A549 (cell line): ENCODE measurements at regions of chr14 and their contacts with region 1.

Region 1: DNA sequence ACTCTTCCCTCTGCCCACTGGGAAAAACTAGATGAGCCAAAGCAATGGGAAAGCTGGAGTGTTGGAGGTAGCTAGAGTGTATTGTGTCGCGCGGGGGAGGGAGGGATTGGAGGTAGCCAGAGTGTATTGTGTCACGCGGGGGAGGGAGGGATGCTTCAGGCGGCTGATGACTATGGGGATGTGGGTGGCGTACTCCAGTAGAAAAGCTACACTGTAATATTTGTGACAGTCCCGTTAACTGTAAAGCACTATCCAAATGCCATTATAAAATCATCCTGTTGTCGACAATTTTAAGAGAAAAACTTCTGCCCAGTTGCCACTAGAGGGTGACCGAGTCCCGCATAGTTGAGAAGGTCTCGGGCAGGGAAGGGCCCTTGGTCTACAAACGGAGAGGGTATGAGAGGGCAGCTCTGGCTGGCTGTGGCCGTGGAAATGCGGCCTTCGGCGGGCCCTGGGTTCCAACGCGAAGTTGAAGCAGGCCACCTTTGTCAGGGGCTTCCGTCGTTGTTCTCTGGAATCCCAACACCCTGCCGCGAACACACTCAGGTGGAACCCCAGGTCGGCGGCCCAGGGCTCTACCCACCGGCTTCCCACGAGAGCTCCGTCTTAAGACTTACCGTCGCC is 15.1 kb upstream of the PLEK2 start:
- DNase-seq: peak; percentile 85 to 91
- ATAC-seq: peak; percentile 85 to 94
- H3K4me3 ChIP-seq: no peak overlapping the region
- H3K27ac ChIP-seq: peak overlapping the region in 1 of 2 experiments; percentile 35; a peak in 1 of 6 replicates
- H3K4me1 ChIP-seq: peaks cover 9% of the 10 kb centered on the region
- CTCF ChIP-seq: peak; percentile 78
- EP300 ChIP-seq: no peak
- POLR2A ChIP-seq: no peak
- RAD21 ChIP-seq: peak; percentile 86 to 95

Region 2: DNA sequence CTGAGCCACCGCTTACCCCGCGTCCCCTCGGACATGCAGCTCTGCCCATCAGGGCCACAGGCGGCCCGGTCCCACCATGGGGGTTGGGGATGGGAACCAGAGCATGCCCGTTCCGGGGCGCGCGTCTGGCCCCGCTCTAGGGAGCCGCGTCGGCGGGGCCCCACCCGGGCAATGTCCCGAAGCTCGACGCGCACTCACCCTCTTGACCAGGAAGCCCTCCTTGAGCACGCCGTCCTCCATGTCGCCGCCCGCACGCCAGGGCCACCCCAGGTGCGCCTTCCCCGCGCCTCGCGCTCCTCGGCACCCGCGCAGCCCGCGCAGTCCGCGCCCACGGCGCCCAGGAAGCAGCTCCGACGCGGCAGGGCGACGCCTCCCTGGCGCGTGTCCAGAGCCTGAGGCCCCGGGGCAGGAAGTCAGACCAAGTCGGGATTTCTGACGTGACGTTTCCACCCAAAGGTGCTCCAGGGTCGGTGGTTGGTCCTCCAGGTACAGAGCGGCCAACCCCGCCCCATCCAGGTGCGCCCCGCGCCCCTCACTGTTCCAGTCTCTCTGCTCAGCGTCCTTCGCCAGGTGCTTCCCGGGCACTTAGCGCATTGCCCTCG is 15.2 kb before region 1 on chr14 and contains the start of gene PLEK2:
- CTCF ChIA-PET with region 1: interaction called, 109 read pairs
- POLR2A ChIA-PET with region 1: no interaction called
- DNase-seq: peak; percentile 40 to 53
- ATAC-seq: peak; percentile 71 to 73
- H3K4me3 ChIP-seq: peak within 1 kb of the TSS; percentile 58
- H3K27ac ChIP-seq: peak within 1 kb of the TSS; percentile 74 to 84
- H3K4me1 ChIP-seq: peaks cover 26% of the 10 kb centered on the region
- CTCF ChIP-seq: no peak
- EP300 ChIP-seq: no peak
- POLR2A ChIP-seq: no peak
- RAD21 ChIP-seq: no peak
- polyA plus RNA-seq, gene PLEK2: 14.7 and 15.1 TPM in 2 replicates

Region 3: DNA sequence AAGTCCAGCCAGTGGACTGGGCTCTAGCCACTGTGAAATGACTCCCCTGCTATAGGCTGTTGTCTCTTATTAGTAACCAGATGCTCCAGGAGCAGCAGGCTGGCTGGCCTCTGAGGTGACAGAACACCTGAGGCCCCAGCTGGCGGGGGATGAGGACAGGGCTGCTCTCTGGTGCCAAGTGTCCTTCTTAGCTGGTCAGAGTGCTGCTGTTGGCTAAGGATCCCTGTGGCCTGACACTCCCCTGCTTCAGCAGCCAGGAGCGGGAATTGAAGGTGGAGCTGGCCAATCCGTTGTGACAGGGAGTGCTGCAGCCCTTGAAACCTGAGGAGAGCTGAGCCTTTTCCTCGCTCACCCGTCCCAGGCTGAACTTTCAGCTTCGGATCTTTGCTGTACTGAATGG is 30.7 kb after region 1 on chr14:
- CTCF ChIA-PET with region 1: interaction called, 10 read pairs
- POLR2A ChIA-PET with region 1: no interaction called
- DNase-seq: no peak
- ATAC-seq: peak; percentile 37 to 57; a peak in 3 of 6 replicates
- H3K4me3 ChIP-seq: no peak overlapping the region
- H3K27ac ChIP-seq: no peak overlapping the region
- H3K4me1 ChIP-seq: no peaks in the 10 kb centered on the region
- CTCF ChIP-seq: no peak
- EP300 ChIP-seq: no peak
- POLR2A ChIP-seq: no peak
- RAD21 ChIP-seq: no peak

Region 4: GRCh38 chr14:67514650-67515385 is 87.7 kb after region 1 on chr14:
- CTCF ChIA-PET with region 1: interaction called, 14 read pairs
- POLR2A ChIA-PET with region 1: no interaction called
- DNase-seq: peak in 1 of 2 experiments; percentile 45
- ATAC-seq: peak; percentile 54 to 65; a peak in 5 of 6 replicates
- H3K4me3 ChIP-seq: peak overlapping the region; percentile 78
- H3K27ac ChIP-seq: peak overlapping the region; percentile 63 to 88
- H3K4me1 ChIP-seq: no peaks in the 10 kb centered on the region
- CTCF ChIP-seq: no peak
- EP300 ChIP-seq: no peak
- POLR2A ChIP-seq: no peak
- RAD21 ChIP-seq: no peak

Region 5: DNA sequence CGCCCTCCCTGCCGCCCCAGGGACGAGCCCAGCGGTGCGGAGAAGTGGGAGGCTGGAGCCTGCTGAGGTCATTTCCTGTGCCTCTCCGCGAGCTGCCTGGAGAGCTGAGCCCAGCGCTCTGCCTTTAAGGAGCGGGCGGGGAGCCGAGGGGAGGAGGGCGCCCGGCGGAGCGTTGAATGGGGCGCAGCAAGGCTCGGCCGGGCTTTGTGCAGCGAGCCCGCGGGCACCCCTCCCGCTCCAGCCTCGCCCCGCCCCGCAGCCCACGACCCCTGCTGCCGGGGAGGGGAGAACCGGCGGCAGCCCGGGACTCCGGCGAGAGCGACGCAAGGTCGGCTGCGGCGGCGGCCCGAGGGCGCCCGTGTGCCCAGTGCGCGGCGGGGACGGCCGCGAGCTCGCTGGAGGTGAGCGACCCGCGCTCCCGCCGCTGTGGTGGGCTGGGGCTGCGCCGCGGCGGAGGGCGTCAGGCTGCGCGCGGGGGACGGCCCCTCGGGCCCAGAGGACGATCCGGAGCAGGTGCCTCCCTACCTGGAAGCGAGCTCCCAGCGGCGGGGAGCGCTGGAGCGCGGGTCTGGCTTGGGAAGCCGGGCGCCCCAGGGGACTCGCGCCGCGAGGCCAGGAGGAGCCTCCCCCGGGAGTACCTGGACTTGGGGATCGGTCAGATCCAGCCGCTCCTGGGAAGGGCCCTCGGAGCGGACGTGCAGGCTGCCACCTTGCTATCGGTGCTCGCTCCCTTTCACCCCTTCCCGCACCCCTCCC is 106.1 kb after region 1 on chr14 and contains the start of gene PLEKHH1:
- CTCF ChIA-PET with region 1: interaction called, 38 read pairs
- POLR2A ChIA-PET with region 1: no interaction called
- DNase-seq: peak; percentile 77 to 87
- ATAC-seq: peak; percentile 96 to 97
- H3K4me3 ChIP-seq: peak within 1 kb of the TSS; percentile 83
- H3K27ac ChIP-seq: peak within 1 kb of the TSS; percentile 83 to 90
- H3K4me1 ChIP-seq: 0 out of 3 replicates have a peak, but pooled peaks cover 3% of the 10 kb centered on the region
- CTCF ChIP-seq: no peak
- EP300 ChIP-seq: no peak
- POLR2A ChIP-seq: peak; percentile 82
- RAD21 ChIP-seq: no peak
- polyA plus RNA-seq, gene PLEKHH1: 5.1 and 6.7 TPM in 2 replicates

Region 6: GRCh38 chr14:67599698-67600561 is 172.8 kb after region 1 on chr14 and contains the start of gene PIGH:
- CTCF ChIA-PET with region 1: interaction called, 17 read pairs
- POLR2A ChIA-PET with region 1: no interaction called
- DNase-seq: peak; percentile 87 to 91
- ATAC-seq: peak; percentile 98 to 99
- H3K4me3 ChIP-seq: peak within 1 kb of the TSS; percentile 86
- H3K27ac ChIP-seq: peak within 1 kb of the TSS; percentile 86 to 89
- H3K4me1 ChIP-seq: peaks cover 11% of the 10 kb centered on the region; the same call in 2 of the 3 replicates
- CTCF ChIP-seq: peak; percentile 56
- EP300 ChIP-seq: no peak
- POLR2A ChIP-seq: peak; percentile 71
- RAD21 ChIP-seq: no peak; a peak in 1 of 5 replicates
- polyA plus RNA-seq, gene PIGH: 37.2 and 46.2 TPM in 2 replicates

Region 7: GRCh38 chr14:67883717-67884116 is 456.6 kb after region 1 on chr14:
- CTCF ChIA-PET with region 1: no interaction called
- POLR2A ChIA-PET with region 1: no interaction called
- DNase-seq: peak; percentile 18
- ATAC-seq: no peak
- H3K4me3 ChIP-seq: no peak overlapping the region
- H3K27ac ChIP-seq: peak overlapping the region in 1 of 2 experiments; percentile 71; a peak in 2 of 6 replicates
- H3K4me1 ChIP-seq: peaks cover 12% of the 10 kb centered on the region; the same call in 1 of the 3 replicates
- CTCF ChIP-seq: peak; percentile 65
- EP300 ChIP-seq: no peak
- POLR2A ChIP-seq: no peak
- RAD21 ChIP-seq: peak; percentile 64 to 79